Common myeloid progenitor, CD34-positive (primary cell): ENCODE measurements at regions of chr1 and their contacts with region 1.

Region 1: GRCh38 chr1:247857069-247857984 is at the start of gene TRIM58:
- DNase-seq: peak; percentile 85 to 91 (median 85)
- H3K4me3 ChIP-seq: peak within 1 kb of the TSS; percentile 73 to 93 (median 87)
- H3K27ac ChIP-seq: peak within 1 kb of the TSS; percentile 67 to 89
- H3K4me1 ChIP-seq: peaks cover 10 to 57% (median 41%) of the 10 kb centered on the region in 4 experiments
- H3K27me3 ChIP-seq: no peaks in the 10 kb centered on the region

Region 2: DNA sequence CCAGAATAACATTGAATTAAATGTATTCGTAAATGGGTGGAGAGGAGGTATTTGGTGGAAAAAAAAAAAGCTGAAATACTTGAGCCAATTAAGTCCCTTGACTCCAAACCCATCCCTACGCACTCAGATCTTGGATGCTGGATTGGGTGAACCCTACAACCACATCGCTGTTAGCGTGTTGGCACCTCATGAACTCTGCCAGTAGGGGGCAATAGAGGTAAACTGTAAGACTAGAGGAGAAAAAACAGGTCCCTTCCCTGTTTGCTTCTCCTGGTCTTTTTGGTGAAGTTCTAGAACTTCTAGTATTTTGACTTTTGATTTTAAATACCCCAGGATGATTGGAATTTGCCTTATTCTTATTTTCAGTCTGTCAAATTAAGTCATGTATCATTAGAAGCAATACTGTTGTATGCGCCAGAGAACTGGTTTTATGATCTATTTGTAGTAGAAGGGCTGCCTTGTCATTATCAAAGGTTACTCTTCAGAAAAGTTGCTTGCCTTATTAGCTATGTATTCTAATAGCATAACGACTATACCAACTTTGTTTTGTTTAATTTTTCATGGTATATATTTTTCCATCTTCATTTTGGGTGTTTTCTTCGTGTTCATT is 175.9 kb before region 1 on chr1:
- CTCF ChIA-PET with region 1: interaction called, 12 read pairs
- POLR2A ChIA-PET with region 1: no interaction called
- DNase-seq: peak; percentile 86 to 93 (median 90)
- H3K4me3 ChIP-seq: peak overlapping the region in 1 of 7 experiments; percentile 5
- H3K27ac ChIP-seq: no peak overlapping the region
- H3K4me1 ChIP-seq: peaks cover 0 to 2% (median 0%) of the 10 kb centered on the region in 4 experiments
- H3K27me3 ChIP-seq: no peaks in the 10 kb centered on the region